Naive thymus-derived CD4-positive, alpha-beta T cell (primary cell): ENCODE measurements at regions of chr10 and their contacts with region 1.

Region 1: GRCh38 chr10:13371897-13372470 is 23.9 kb upstream of the SEPHS1 start:
- DNase-seq: peak; percentile 31 to 81 (median 78)
- ATAC-seq: peak; percentile 99
- H3K4me3 ChIP-seq: no peak overlapping the region
- H3K4me3 Mint-ChIP-seq: no peak overlapping the region
- H3K27ac ChIP-seq: no peak overlapping the region
- H3K27ac Mint-ChIP-seq: no peak overlapping the region
- H3K4me1 ChIP-seq: no peaks in the 10 kb centered on the region
- H3K4me1 Mint-ChIP-seq: peaks cover 0 to 4% (median 0%) of the 10 kb centered on the region in 7 donors
- H3K27me3 ChIP-seq: no peaks in the 10 kb centered on the region
- H3K27me3 Mint-ChIP-seq: peaks cover 0 to 4% (median 0%) of the 10 kb centered on the region in 5 donors

Region 2: GRCh38 chr10:11921800-11922392 is 1450.1 kb before region 1 on chr10:
- CTCF ChIA-PET with region 1: no interaction called
- POLR2A ChIA-PET with region 1: no interaction called
- intact Hi-C with region 1: no loop called
- DNase-seq: no peak
- ATAC-seq: no peak
- H3K4me3 ChIP-seq: no peak overlapping the region
- H3K4me3 Mint-ChIP-seq: no peak overlapping the region
- H3K27ac ChIP-seq: peak overlapping the region; percentile 9
- H3K27ac Mint-ChIP-seq: peak overlapping the region in 7 of 9 donors; percentile 17 to 79 (median 48)
- H3K4me1 ChIP-seq: no peaks in the 10 kb centered on the region
- H3K4me1 Mint-ChIP-seq: peaks cover 0 to 9% (median 0%) of the 10 kb centered on the region in 7 donors
- H3K27me3 ChIP-seq: no peaks in the 10 kb centered on the region
- H3K27me3 Mint-ChIP-seq: no peaks in the 10 kb centered on the region

Region 3: GRCh38 chr10:13257621-13258140 is 114.3 kb before region 1 on chr10:
- CTCF ChIA-PET with region 1: no interaction called
- POLR2A ChIA-PET with region 1: no interaction called
- intact Hi-C with region 1: no loop called
- DNase-seq: no peak
- ATAC-seq: no peak
- H3K4me3 ChIP-seq: no peak overlapping the region
- H3K4me3 Mint-ChIP-seq: no peak overlapping the region
- H3K27ac ChIP-seq: no peak overlapping the region
- H3K27ac Mint-ChIP-seq: peak overlapping the region in 1 of 9 donors; percentile 58
- H3K4me1 ChIP-seq: no peaks in the 10 kb centered on the region
- H3K4me1 Mint-ChIP-seq: peaks cover 0 to 8% (median 4%) of the 10 kb centered on the region in 7 donors
- H3K27me3 ChIP-seq: no peaks in the 10 kb centered on the region
- H3K27me3 Mint-ChIP-seq: peaks cover 0 to 27% (median 5%) of the 10 kb centered on the region in 5 donors

Region 4: GRCh38 chr10:13417459-13418126 is 45.6 kb after region 1 on chr10:
- CTCF ChIA-PET with region 1: no interaction called
- POLR2A ChIA-PET with region 1: no interaction called
- intact Hi-C with region 1: no loop called
- DNase-seq: no peak
- ATAC-seq: no peak
- H3K4me3 ChIP-seq: no peak overlapping the region
- H3K4me3 Mint-ChIP-seq: no peak overlapping the region
- H3K27ac ChIP-seq: no peak overlapping the region
- H3K27ac Mint-ChIP-seq: no peak overlapping the region
- H3K4me1 ChIP-seq: no peaks in the 10 kb centered on the region
- H3K4me1 Mint-ChIP-seq: no peaks in the 10 kb centered on the region
- H3K27me3 ChIP-seq: no peaks in the 10 kb centered on the region
- H3K27me3 Mint-ChIP-seq: peaks cover 0 to 19% (median 9%) of the 10 kb centered on the region in 5 donors

Region 5: GRCh38 chr10:13440185-13441061 is 68.4 kb after region 1 on chr10:
- CTCF ChIA-PET with region 1: interaction called, 35 read pairs
- POLR2A ChIA-PET with region 1: interaction called, 4 read pairs
- intact Hi-C with region 1: loop called (anchors 1 kb)
- DNase-seq: peak; percentile 39 to 76 (median 67)
- ATAC-seq: peak; percentile 96
- H3K4me3 ChIP-seq: peak overlapping the region; percentile 56
- H3K4me3 Mint-ChIP-seq: peak overlapping the region; percentile 38 to 86 (median 76)
- H3K27ac ChIP-seq: no peak overlapping the region
- H3K27ac Mint-ChIP-seq: peak overlapping the region in 2 of 9 donors; percentile 32 to 37
- H3K4me1 ChIP-seq: peaks cover 9 to 11% of the 10 kb centered on the region in 2 donors
- H3K4me1 Mint-ChIP-seq: peaks cover 5 to 16% (median 14%) of the 10 kb centered on the region in 7 donors
- H3K27me3 ChIP-seq: peaks cover 0 to 9% of the 10 kb centered on the region in 2 donors
- H3K27me3 Mint-ChIP-seq: peaks cover 38 to 57% (median 48%) of the 10 kb centered on the region in 5 donors

Region 6: GRCh38 chr10:13536674-13537366 is 164.8 kb after region 1 on chr10:
- CTCF ChIA-PET with region 1: no interaction called
- POLR2A ChIA-PET with region 1: no interaction called
- intact Hi-C with region 1: loop called (anchors 1 to 10 kb)
- DNase-seq: peak in 1 of 9 donors; percentile 25
- ATAC-seq: peak; percentile 56
- H3K4me3 ChIP-seq: no peak overlapping the region
- H3K4me3 Mint-ChIP-seq: no peak overlapping the region
- H3K27ac ChIP-seq: no peak overlapping the region
- H3K27ac Mint-ChIP-seq: peak overlapping the region in 1 of 9 donors; percentile 26
- H3K4me1 ChIP-seq: no peaks in the 10 kb centered on the region
- H3K4me1 Mint-ChIP-seq: no peaks in the 10 kb centered on the region
- H3K27me3 ChIP-seq: no peaks in the 10 kb centered on the region
- H3K27me3 Mint-ChIP-seq: peaks cover 36 to 77% (median 63%) of the 10 kb centered on the region in 5 donors

Region 7: DNA sequence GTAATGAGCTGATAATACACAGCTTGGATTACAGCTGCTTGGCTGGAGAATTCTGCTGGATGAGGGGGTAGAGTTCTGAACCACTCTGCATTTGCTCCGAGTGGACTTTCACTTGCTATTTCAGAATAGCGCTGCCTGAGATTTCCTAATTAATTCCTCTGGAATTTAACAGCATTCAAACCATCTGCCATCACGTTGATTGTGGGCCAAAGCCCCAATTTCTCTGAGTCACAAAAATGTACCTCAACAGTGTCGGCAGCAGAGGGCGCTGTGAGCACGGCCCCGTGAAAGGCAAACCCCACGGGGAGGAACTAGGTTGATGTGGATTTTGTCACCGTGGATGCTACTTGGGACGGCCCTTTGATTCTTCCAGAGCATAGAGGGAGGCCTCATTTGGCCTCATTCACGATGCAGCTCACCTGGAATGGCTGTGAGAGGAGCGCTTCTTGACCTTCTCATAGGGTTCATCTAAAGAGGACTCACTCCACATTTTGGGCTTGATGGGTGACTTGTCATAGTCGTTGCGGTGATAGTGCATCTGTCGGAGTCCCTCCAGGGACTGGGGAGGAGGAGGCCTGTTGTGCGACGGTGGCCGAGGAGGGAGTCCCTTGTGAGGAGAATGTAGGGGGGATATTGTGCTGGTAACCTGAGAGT is 288.0 kb after region 1 on chr10:
- CTCF ChIA-PET with region 1: no interaction called
- POLR2A ChIA-PET with region 1: no interaction called
- intact Hi-C with region 1: loop called in 1 of 2 experiments (anchors 1 kb)
- DNase-seq: peak; percentile 29 to 74 (median 64)
- ATAC-seq: peak; percentile 78
- H3K4me3 ChIP-seq: no peak overlapping the region
- H3K4me3 Mint-ChIP-seq: peak overlapping the region in 7 of 10 donors; percentile 9 to 63 (median 48)
- H3K27ac ChIP-seq: no peak overlapping the region
- H3K27ac Mint-ChIP-seq: peak overlapping the region in 4 of 9 donors; percentile 8 to 76 (median 34)
- H3K4me1 ChIP-seq: peaks cover 0 to 16% of the 10 kb centered on the region in 2 donors
- H3K4me1 Mint-ChIP-seq: peaks cover 6 to 16% (median 14%) of the 10 kb centered on the region in 7 donors
- H3K27me3 ChIP-seq: no peaks in the 10 kb centered on the region
- H3K27me3 Mint-ChIP-seq: peaks cover 0 to 4% (median 0%) of the 10 kb centered on the region in 5 donors

Region 8: GRCh38 chr10:13776861-13777311 is 404.9 kb after region 1 on chr10:
- CTCF ChIA-PET with region 1: interaction called, 3 read pairs
- POLR2A ChIA-PET with region 1: no interaction called
- intact Hi-C with region 1: loop called (anchors 1 kb)
- DNase-seq: no peak
- ATAC-seq: no peak
- H3K4me3 ChIP-seq: no peak overlapping the region
- H3K4me3 Mint-ChIP-seq: no peak overlapping the region
- H3K27ac ChIP-seq: no peak overlapping the region
- H3K27ac Mint-ChIP-seq: no peak overlapping the region
- H3K4me1 ChIP-seq: peaks cover 0 to 4% of the 10 kb centered on the region in 2 donors
- H3K4me1 Mint-ChIP-seq: peaks cover 0 to 6% (median 0%) of the 10 kb centered on the region in 7 donors
- H3K27me3 ChIP-seq: no peaks in the 10 kb centered on the region
- H3K27me3 Mint-ChIP-seq: peaks cover 8 to 18% (median 11%) of the 10 kb centered on the region in 5 donors

Region 9: GRCh38 chr10:15072358-15072757 is 1700.4 kb after region 1 on chr10:
- CTCF ChIA-PET with region 1: no interaction called
- POLR2A ChIA-PET with region 1: no interaction called
- intact Hi-C with region 1: no loop called
- DNase-seq: no peak
- ATAC-seq: no peak
- H3K4me3 ChIP-seq: no peak overlapping the region
- H3K4me3 Mint-ChIP-seq: peak overlapping the region in 1 of 10 donors; percentile 10
- H3K27ac ChIP-seq: no peak overlapping the region
- H3K27ac Mint-ChIP-seq: no peak overlapping the region
- H3K4me1 ChIP-seq: no peaks in the 10 kb centered on the region
- H3K4me1 Mint-ChIP-seq: no peaks in the 10 kb centered on the region
- H3K27me3 ChIP-seq: no peaks in the 10 kb centered on the region
- H3K27me3 Mint-ChIP-seq: peaks cover 0 to 9% (median 3%) of the 10 kb centered on the region in 5 donors

Region 10: GRCh38 chr10:15106352-15107013 is 1734.5 kb after region 1 on chr10:
- CTCF ChIA-PET with region 1: no interaction called
- POLR2A ChIA-PET with region 1: no interaction called
- intact Hi-C with region 1: loop called in 1 of 2 experiments (anchors 2 kb)
- DNase-seq: peak; percentile 41 to 67 (median 58)
- ATAC-seq: peak; percentile 99
- H3K4me3 ChIP-seq: no peak overlapping the region
- H3K4me3 Mint-ChIP-seq: no peak overlapping the region
- H3K27ac ChIP-seq: peak overlapping the region; percentile 9
- H3K27ac Mint-ChIP-seq: peak overlapping the region; percentile 26 to 88 (median 68)
- H3K4me1 ChIP-seq: no peaks in the 10 kb centered on the region
- H3K4me1 Mint-ChIP-seq: peaks cover 3 to 9% (median 5%) of the 10 kb centered on the region in 7 donors
- H3K27me3 ChIP-seq: no peaks in the 10 kb centered on the region
- H3K27me3 Mint-ChIP-seq: no peaks in the 10 kb centered on the region